ENCODE measurements at regions of chr5 and their contacts with region 1.

Region 1: GRCh38 chr5:123582550-123583285 is 70.7 kb downstream of the CSNK1G3 start:
- DNase-seq: no peak
- ATAC-seq: no peak
- H3K4me3 ChIP-seq: no peak overlapping the region
- H3K4me3 Mint-ChIP-seq: no peak overlapping the region
- H3K27ac ChIP-seq: no peak overlapping the region
- H3K27ac Mint-ChIP-seq: no peak overlapping the region
- H3K4me1 ChIP-seq: no peaks in the 10 kb centered on the region
- H3K4me1 Mint-ChIP-seq: peaks cover 4% of the 10 kb centered on the region
- H3K27me3 ChIP-seq: no peaks in the 10 kb centered on the region
- H3K27me3 Mint-ChIP-seq: no peaks in the 10 kb centered on the region
- CTCF ChIP-seq: no peak

Region 2: DNA sequence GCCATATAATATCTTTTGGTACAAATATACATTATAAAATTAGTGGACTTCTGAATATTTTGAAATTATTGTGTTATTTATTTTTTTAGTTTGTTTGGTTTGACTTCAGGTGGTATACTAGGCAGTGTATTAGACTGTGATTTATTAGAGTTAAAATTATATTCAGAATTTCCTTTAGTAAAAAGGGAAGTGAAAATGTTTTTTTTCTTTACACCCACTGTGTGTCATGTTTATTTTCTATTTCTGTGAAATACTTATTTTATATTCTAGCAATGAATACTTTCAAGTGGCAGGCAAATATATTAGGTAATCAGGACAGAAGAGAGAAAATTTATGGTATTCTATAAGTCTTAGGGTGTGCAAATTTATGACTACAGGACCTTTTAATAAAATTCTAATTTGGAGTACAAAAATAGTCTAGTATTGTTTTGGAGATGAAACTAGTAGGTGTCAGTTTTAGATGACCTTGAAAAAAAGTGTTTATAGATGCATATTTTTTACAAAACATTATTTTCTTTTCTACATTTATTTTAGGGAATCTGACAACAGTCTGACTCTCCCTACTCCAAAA is 62.0 kb before region 1 on chr5:
- CTCF ChIA-PET with region 1: no interaction called
- POLR2A ChIA-PET with region 1: no interaction called
- intact Hi-C with region 1: loop called in 1 of 2 experiments (anchors 5 kb)
- DNase-seq: no peak
- ATAC-seq: no peak
- H3K4me3 ChIP-seq: no peak overlapping the region
- H3K4me3 Mint-ChIP-seq: no peak overlapping the region
- H3K27ac ChIP-seq: no peak overlapping the region
- H3K27ac Mint-ChIP-seq: no peak overlapping the region
- H3K4me1 ChIP-seq: peaks cover 18% of the 10 kb centered on the region
- H3K4me1 Mint-ChIP-seq: peaks cover 61% of the 10 kb centered on the region
- H3K27me3 ChIP-seq: no peaks in the 10 kb centered on the region
- H3K27me3 Mint-ChIP-seq: no peaks in the 10 kb centered on the region
- CTCF ChIP-seq: no peak

Region 3: DNA sequence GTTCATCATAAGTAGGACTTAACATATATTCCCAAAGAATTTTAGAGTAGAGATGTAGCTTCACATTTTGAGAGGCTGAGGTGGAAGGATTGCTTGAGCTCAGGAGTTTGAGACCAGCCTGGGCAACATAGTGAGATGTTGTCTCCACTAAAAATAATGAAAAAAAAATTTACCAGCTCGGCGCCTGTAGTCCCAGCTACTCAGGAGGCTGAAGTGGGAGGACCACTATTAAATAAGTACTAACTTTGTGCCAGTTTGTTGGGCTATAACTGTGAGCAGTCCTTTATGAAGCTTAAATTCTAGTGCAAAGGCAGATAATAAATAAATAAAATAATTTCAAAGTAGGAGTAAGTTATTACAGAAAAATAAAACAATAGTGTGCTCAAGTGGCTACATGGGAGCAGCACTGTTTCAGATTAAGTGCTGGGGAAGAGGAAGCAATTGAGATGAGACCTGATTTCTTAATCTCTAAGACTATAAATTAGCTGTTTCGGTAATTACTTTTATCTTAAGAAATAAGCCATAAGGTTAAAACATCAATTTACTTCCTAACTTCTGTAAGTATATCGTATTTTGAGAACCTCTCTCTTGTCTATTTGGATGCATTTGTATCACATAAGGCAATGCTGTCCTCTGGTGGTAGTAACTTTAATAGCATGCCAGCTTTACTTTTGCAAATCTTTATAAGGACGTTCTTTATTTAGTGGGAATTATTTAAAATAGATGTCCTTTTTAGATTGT is 28.1 kb after region 1 on chr5:
- CTCF ChIA-PET with region 1: no interaction called
- POLR2A ChIA-PET with region 1: no interaction called
- intact Hi-C with region 1: no loop called
- DNase-seq: peak in 3 of 9 experiments; percentile 28 to 77 (median 70)
- ATAC-seq: peak; percentile 76
- H3K4me3 ChIP-seq: no peak overlapping the region
- H3K4me3 Mint-ChIP-seq: no peak overlapping the region
- H3K27ac ChIP-seq: no peak overlapping the region
- H3K27ac Mint-ChIP-seq: peak overlapping the region; percentile 87
- H3K4me1 ChIP-seq: no peaks in the 10 kb centered on the region
- H3K4me1 Mint-ChIP-seq: peaks cover 3% of the 10 kb centered on the region
- H3K27me3 ChIP-seq: no peaks in the 10 kb centered on the region
- H3K27me3 Mint-ChIP-seq: no peaks in the 10 kb centered on the region
- CTCF ChIP-seq: peak; percentile 99